Left cardiac atrium (tissue), 4 donors: ENCODE measurements at regions of chr6 and their contacts with region 1.

Region 1: DNA sequence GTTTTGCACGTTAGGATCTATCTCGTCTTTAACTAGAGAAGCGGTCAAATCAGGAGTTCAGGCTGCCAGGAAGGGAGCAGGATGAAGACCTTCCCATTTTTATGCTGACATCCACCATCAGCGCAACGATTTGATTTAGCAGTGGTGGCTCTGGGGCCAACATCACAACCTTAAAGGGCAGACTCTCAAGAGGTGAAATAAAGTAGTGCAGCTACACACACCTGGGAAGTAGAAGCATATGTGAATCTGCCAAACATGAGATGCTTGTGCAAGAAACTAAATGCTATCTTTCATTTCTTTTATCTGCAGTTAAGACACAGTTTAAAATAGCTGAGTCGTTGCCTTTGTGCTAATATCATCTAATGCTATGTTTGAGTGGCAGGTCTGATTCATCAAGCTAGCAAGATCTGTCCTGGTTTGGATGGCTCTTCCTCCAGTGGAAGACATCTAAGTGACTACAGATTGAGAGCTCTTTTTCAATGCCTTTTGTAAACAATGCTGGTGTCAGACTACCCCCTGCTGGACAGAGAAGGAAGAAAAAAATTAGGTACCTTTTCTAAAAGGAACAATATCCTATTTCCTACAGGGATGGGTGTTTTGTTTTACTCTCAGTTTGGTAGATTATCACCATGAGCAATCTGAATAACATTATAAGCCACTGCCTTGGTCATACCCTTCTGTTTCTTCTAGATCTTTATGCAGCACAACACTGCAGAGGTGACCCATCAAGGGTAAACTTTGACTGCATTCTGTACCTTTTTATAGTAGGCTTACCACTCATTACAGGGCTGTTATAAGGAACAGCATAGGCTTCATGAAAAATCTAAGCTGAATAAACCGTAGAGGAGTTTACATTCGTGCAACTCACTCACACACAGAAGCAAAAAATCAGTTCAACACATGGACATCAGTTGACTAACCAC is 171.6 kb upstream of the FBXL4 start:
- DNase-seq: no peak
- ATAC-seq: peak in 1 of 2 donors; percentile 45

Region 2: GRCh38 chr6:98845211-98846020 is 274.0 kb before region 1 on chr6:
- intact Hi-C with region 1: loop called (anchors 10 kb)
- DNase-seq: peak; percentile 70
- ATAC-seq: peak; percentile 70 to 71

Region 3: DNA sequence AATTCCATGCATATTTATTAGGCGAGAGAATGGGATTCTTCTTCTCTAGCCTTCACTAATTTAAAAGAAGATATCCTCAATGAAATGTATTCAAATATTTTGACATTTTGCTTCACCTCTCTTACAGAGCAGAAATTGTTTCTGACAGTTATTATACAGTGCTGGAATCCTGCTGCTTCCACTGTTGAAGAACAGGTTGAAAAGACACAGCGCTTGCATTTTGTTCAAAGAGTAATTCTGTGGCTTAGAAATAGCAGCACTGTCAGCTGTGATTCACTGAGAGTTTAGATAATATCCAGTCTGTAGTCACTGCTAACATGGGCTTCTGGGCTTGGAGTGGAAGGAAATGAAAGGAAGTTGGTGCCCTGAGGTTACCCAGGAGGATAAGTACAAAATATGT is 54.5 kb before region 1 on chr6:
- intact Hi-C with region 1: no loop called
- DNase-seq: no peak
- ATAC-seq: no peak

Region 4: GRCh38 chr6:99219788-99220187 is 100.4 kb after region 1 on chr6:
- intact Hi-C with region 1: no loop called
- DNase-seq: no peak
- ATAC-seq: peak; percentile 15 to 45